HepG2 (cell line): ENCODE measurements at regions of chr7 and their contacts with region 1.

Region 1: GRCh38 chr7:107201795-107202450 is 33.1 kb downstream of the HBP1 start:
- DNase-seq: peak; percentile 27
- ATAC-seq: peak; percentile 94
- H3K4me3 ChIP-seq: no peak overlapping the region
- H3K27ac ChIP-seq: no peak overlapping the region
- H3K4me1 ChIP-seq: no peaks in the 10 kb centered on the region
- H3K27me3 ChIP-seq: no peaks in the 10 kb centered on the region
- CTCF ChIP-seq: peak; percentile 66
- EP300 ChIP-seq: no peak
- POLR2A ChIP-seq: no peak
- RAD21 ChIP-seq: peak; percentile 51; the same call in 1 of the 2 replicates

Region 2: GRCh38 chr7:107180378-107180777 is 21.5 kb before region 1 on chr7:
- CTCF ChIA-PET with region 1: no interaction called
- POLR2A ChIA-PET with region 1: no interaction called
- in situ Hi-C with region 1: no loop called
- intact Hi-C with region 1: no loop called
- DNase-seq: peak; percentile 22
- ATAC-seq: no peak
- H3K4me3 ChIP-seq: no peak overlapping the region
- H3K27ac ChIP-seq: no peak overlapping the region
- H3K4me1 ChIP-seq: peaks cover 14% of the 10 kb centered on the region
- H3K27me3 ChIP-seq: no peaks in the 10 kb centered on the region
- CTCF ChIP-seq: no peak
- EP300 ChIP-seq: no peak
- POLR2A ChIP-seq: no peak
- RAD21 ChIP-seq: no peak

Region 3: DNA sequence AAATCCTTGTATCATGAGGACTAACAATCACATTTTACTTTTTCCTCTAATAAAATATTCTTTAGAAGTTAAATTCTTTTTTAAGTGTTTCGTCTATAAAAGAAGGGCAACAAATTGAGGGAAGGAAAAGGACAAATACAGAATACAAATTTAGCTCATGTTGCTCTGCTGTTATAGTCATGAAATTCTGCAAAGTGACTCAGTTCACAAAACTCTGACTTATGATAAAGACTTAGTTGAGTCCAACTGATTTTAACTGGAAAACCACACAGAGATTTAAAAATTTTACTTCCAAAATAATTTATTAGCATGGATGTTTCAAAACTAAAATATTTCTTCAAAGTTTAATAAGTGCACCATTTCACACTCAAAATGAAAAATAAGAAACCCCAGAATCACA is 192.9 kb after region 1 on chr7:
- CTCF ChIA-PET with region 1: no interaction called
- POLR2A ChIA-PET with region 1: no interaction called
- in situ Hi-C with region 1: no loop called
- intact Hi-C with region 1: no loop called
- DNase-seq: no peak
- ATAC-seq: no peak
- H3K4me3 ChIP-seq: no peak overlapping the region
- H3K27ac ChIP-seq: no peak overlapping the region
- H3K4me1 ChIP-seq: peaks cover 13% of the 10 kb centered on the region
- H3K27me3 ChIP-seq: no peaks in the 10 kb centered on the region
- CTCF ChIP-seq: no peak
- EP300 ChIP-seq: no peak
- POLR2A ChIP-seq: no peak
- RAD21 ChIP-seq: no peak

Region 4: DNA sequence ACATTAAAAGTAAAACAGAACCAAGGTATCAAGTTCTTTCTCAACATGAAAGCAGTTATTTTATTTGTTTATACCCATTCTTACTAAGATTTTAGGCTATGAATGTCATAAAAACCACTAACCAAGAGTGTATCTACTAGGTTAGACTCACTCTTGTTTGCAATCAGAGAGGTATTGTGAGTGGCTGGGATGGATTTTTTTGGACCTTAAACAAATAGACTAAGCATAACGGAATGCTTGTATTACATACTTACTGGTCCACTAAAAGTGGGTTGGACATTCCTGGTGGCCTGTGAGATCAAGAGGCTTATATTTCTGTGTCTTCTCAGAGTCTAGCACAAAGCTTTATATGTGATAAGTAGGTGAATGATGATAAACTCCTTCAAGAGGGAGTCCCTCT is 509.4 kb after region 1 on chr7:
- CTCF ChIA-PET with region 1: no interaction called
- POLR2A ChIA-PET with region 1: no interaction called
- in situ Hi-C with region 1: loop called (anchors 25 kb)
- intact Hi-C with region 1: no loop called
- DNase-seq: no peak
- ATAC-seq: no peak
- H3K4me3 ChIP-seq: no peak overlapping the region
- H3K27ac ChIP-seq: no peak overlapping the region
- H3K4me1 ChIP-seq: no peaks in the 10 kb centered on the region
- H3K27me3 ChIP-seq: no peaks in the 10 kb centered on the region; a peak in 2 of 5 replicates
- CTCF ChIP-seq: no peak
- EP300 ChIP-seq: no peak
- POLR2A ChIP-seq: no peak
- RAD21 ChIP-seq: no peak

Region 5: DNA sequence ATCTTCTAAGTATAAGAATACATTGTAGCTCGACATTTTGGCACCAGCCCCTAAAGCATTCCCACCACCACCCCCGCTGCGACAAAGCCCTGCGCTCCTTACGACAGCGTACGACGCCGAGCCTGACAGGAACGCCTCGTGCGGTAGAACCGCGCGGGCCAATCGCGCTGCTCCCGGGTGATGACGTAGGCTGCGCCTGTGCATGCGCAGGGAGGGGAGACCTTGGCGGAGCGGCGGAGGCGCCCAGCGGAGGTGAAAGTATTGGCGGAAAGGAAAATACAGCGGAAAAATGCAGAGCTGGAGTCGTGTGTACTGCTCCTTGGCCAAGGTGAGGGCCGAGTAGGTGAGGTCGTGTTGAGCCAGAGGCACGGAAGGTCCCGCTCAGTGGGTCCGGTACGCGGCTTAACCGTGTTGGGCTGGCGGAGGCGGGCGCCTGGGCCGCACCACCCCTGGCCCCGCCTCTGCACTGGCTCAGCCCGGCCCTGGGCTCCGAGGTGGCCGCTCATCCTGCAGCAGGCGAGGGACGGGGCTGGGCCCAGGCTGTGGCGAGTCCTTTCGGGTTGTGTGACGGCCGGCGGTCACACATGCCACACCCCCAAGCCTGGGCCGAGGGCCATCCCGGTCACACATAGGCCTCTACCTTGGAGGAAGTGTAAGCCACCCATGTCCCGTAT is 689.2 kb after region 1 on chr7 and contains the start of gene DLD:
- CTCF ChIA-PET with region 1: no interaction called
- POLR2A ChIA-PET with region 1: no interaction called
- in situ Hi-C with region 1: loop called (anchors 25 kb)
- intact Hi-C with region 1: no loop called
- DNase-seq: peak; percentile 76
- ATAC-seq: peak; percentile 98
- H3K4me3 ChIP-seq: peak within 1 kb of the TSS; percentile 73 to 86 (median 79)
- H3K27ac ChIP-seq: peak within 1 kb of the TSS; percentile 86
- H3K4me1 ChIP-seq: peaks cover 33% of the 10 kb centered on the region
- H3K27me3 ChIP-seq: no peaks in the 10 kb centered on the region; a peak in 1 of 5 replicates
- CTCF ChIP-seq: no peak
- EP300 ChIP-seq: no peak
- POLR2A ChIP-seq: peak; percentile 75 to 85
- RAD21 ChIP-seq: no peak
- total RNA-seq, gene DLD: 95.2 and 128 TPM in 2 replicates